ENCODE measurements at regions of chr5 and their contacts with region 1.

Region 1: GRCh38 chr5:118791926-118792734 is 196.2 kb downstream of the DTWD2 start:
- DNase-seq: peak; percentile 36
- ATAC-seq: peak; percentile 97
- H3K4me3 ChIP-seq: no peak overlapping the region
- H3K27ac ChIP-seq: no peak overlapping the region
- H3K4me1 ChIP-seq: no peaks in the 10 kb centered on the region
- H3K27me3 ChIP-seq: no peaks in the 10 kb centered on the region
- CTCF ChIP-seq: peak; percentile 78 to 88 (median 84)
- EP300 ChIP-seq: no peak
- POLR2A ChIP-seq: no peak
- RAD21 ChIP-seq: peak; percentile 90

Region 2: DNA sequence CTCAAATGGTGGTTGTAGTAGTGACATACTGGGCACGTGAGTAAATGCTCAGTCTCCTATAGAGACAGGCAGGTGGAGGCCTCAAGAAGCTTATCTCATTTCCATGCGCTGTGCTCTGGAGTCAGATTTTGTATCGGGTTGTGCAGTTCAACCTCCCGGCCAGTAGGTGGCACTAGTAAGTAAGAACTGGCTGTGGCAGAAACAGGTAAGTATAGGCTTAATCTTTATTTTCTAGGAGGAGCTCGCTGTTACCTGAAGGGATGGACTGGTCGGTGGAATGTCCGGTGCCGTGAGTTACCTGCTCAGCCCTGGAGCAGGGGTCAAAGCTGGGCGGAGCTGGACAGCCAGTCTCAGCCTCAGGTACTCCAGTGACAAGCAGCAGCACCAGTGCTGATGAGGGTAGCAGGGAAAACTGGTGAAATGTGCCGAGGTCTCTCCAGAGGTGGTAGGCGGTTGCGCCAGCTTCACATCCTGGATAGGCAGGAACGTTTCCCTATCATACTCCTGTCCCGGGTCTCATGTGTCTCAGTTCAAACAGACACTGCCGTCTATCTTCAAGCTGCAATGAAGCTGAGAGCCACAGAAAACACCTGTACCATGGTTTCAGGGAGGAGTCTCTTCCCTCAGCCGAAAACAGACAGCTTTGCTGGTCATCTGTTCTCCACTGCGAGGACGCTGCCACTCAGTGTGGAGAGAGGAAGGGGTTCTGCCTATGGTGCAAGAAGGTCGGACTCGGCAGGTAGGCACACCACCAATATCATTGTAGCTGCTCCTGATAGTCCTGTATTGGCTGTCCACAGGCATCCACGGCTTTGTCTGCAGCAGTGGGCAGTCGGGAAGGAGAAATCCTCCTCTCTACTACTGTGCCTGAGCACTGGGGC is 1337.2 kb before region 1 on chr5:
- CTCF ChIA-PET with region 1: interaction called, 10 read pairs
- POLR2A ChIA-PET with region 1: no interaction called
- RAD21 ChIA-PET with region 1: interaction called, 10 read pairs
- SMC1A ChIA-PET with region 1: interaction called, 3 read pairs
- in situ Hi-C with region 1: loop called (anchors 10 kb)
- intact Hi-C with region 1: loop called (anchors 2 kb)
- DNase-seq: peak; percentile 20
- ATAC-seq: peak; percentile 95
- H3K4me3 ChIP-seq: peak overlapping the region; percentile 1; the same call in 1 of the 2 replicates
- H3K27ac ChIP-seq: no peak overlapping the region
- H3K4me1 ChIP-seq: no peaks in the 10 kb centered on the region
- H3K27me3 ChIP-seq: no peaks in the 10 kb centered on the region
- CTCF ChIP-seq: peak; percentile 80 to 91 (median 87)
- EP300 ChIP-seq: no peak
- POLR2A ChIP-seq: no peak
- RAD21 ChIP-seq: peak; percentile 81

Region 3: GRCh38 chr5:118593003-118593328 is 199.2 kb before region 1 on chr5:
- CTCF ChIA-PET with region 1: no interaction called
- POLR2A ChIA-PET with region 1: no interaction called
- RAD21 ChIA-PET with region 1: no interaction called
- SMC1A ChIA-PET with region 1: interaction called, 3 read pairs
- in situ Hi-C with region 1: no loop called
- intact Hi-C with region 1: loop called (anchors 1 kb)
- DNase-seq: no peak
- ATAC-seq: peak; percentile 57; the same call in 2 of the 3 replicates
- H3K4me3 ChIP-seq: no peak overlapping the region
- H3K27ac ChIP-seq: no peak overlapping the region
- H3K4me1 ChIP-seq: no peaks in the 10 kb centered on the region
- H3K27me3 ChIP-seq: no peaks in the 10 kb centered on the region
- CTCF ChIP-seq: peak; percentile 20 to 32 (median 30); a peak in 2 of 6 replicates
- EP300 ChIP-seq: no peak
- POLR2A ChIP-seq: no peak
- RAD21 ChIP-seq: 0 out of 2 replicates have a peak, but pooled peaks have one; percentile 20

Region 4: GRCh38 chr5:118698774-118699173 is 93.4 kb before region 1 on chr5:
- CTCF ChIA-PET with region 1: interaction called, 8 read pairs
- POLR2A ChIA-PET with region 1: no interaction called
- RAD21 ChIA-PET with region 1: interaction called, 11 read pairs
- SMC1A ChIA-PET with region 1: interaction called, 3 read pairs
- in situ Hi-C with region 1: no loop called
- intact Hi-C with region 1: loop called (anchors 5 kb)
- DNase-seq: no peak
- ATAC-seq: peak; percentile 52
- H3K4me3 ChIP-seq: no peak overlapping the region
- H3K27ac ChIP-seq: no peak overlapping the region
- H3K4me1 ChIP-seq: no peaks in the 10 kb centered on the region
- H3K27me3 ChIP-seq: no peaks in the 10 kb centered on the region
- CTCF ChIP-seq: peak in 2 of 3 experiments; percentile 7 to 41; a peak in 2 of 6 replicates
- EP300 ChIP-seq: no peak
- POLR2A ChIP-seq: no peak
- RAD21 ChIP-seq: peak; percentile 43; the same call in 1 of the 2 replicates

Region 5: DNA sequence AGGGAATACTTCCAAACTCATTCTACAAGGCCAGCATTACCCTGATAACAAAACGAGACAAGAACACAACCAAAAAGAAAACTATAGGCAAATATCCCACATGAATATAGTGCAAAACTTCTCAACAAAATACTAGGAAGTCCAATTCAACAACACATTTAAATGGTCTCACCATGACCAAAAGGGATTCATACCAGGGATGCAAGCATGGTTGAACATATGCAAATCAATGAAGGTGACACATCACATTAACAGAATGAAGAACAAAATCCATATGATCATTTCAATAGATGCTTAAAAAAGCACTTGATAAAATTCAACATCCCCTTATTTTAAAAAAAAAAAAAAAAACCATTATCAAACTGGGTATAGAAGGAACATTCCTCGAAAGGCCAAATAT is 10.2 kb after region 1 on chr5:
- CTCF ChIA-PET with region 1: interaction called, 12 read pairs
- POLR2A ChIA-PET with region 1: no interaction called
- RAD21 ChIA-PET with region 1: no interaction called
- SMC1A ChIA-PET with region 1: interaction called, 5 read pairs
- in situ Hi-C with region 1: no loop called
- intact Hi-C with region 1: no loop called
- DNase-seq: no peak
- ATAC-seq: no peak
- H3K4me3 ChIP-seq: no peak overlapping the region
- H3K27ac ChIP-seq: no peak overlapping the region
- H3K4me1 ChIP-seq: no peaks in the 10 kb centered on the region
- H3K27me3 ChIP-seq: no peaks in the 10 kb centered on the region
- CTCF ChIP-seq: no peak
- EP300 ChIP-seq: no peak
- POLR2A ChIP-seq: no peak
- RAD21 ChIP-seq: no peak

Region 6: DNA sequence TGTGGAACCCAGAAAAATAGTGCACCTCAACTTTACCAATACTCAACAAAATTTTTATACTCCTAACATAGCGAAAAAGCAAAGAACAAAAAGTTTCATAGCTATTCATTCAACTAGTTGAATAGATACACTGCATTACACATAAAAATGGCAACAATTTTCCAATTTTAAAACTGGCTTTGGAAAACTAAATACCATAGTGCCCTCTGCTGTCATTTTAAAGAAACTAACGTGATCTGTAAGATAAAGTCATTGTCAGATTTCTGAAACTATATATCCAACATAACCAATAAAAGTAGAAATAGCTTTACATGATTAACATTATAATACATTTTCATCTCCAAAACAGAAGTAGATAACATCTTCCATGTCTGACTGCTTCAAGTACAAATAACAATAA is 164.6 kb after region 1 on chr5:
- CTCF ChIA-PET with region 1: interaction called, 25 read pairs
- POLR2A ChIA-PET with region 1: no interaction called
- RAD21 ChIA-PET with region 1: interaction called, 4 read pairs
- SMC1A ChIA-PET with region 1: interaction called, 13 read pairs
- in situ Hi-C with region 1: no loop called
- intact Hi-C with region 1: loop called (anchors 5 kb)
- DNase-seq: no peak
- ATAC-seq: no peak
- H3K4me3 ChIP-seq: no peak overlapping the region
- H3K27ac ChIP-seq: no peak overlapping the region
- H3K4me1 ChIP-seq: no peaks in the 10 kb centered on the region
- H3K27me3 ChIP-seq: no peaks in the 10 kb centered on the region
- CTCF ChIP-seq: peak in 2 of 3 experiments; percentile 31 to 46; a peak in 2 of 6 replicates
- EP300 ChIP-seq: no peak
- POLR2A ChIP-seq: no peak
- RAD21 ChIP-seq: peak; percentile 56

Region 7: GRCh38 chr5:119031905-119032304 is 239.8 kb after region 1 on chr5:
- CTCF ChIA-PET with region 1: no interaction called
- POLR2A ChIA-PET with region 1: no interaction called
- RAD21 ChIA-PET with region 1: no interaction called
- SMC1A ChIA-PET with region 1: no interaction called
- in situ Hi-C with region 1: no loop called
- intact Hi-C with region 1: no loop called
- DNase-seq: peak; percentile 73
- ATAC-seq: peak; percentile 93
- H3K4me3 ChIP-seq: peak overlapping the region; percentile 29; the same call in 1 of the 2 replicates
- H3K27ac ChIP-seq: peak overlapping the region; percentile 95
- H3K4me1 ChIP-seq: peaks cover 39% of the 10 kb centered on the region
- H3K27me3 ChIP-seq: no peaks in the 10 kb centered on the region
- CTCF ChIP-seq: no peak
- EP300 ChIP-seq: no peak
- POLR2A ChIP-seq: peak; percentile 51; the same call in 1 of the 2 replicates
- RAD21 ChIP-seq: no peak

Region 8: DNA sequence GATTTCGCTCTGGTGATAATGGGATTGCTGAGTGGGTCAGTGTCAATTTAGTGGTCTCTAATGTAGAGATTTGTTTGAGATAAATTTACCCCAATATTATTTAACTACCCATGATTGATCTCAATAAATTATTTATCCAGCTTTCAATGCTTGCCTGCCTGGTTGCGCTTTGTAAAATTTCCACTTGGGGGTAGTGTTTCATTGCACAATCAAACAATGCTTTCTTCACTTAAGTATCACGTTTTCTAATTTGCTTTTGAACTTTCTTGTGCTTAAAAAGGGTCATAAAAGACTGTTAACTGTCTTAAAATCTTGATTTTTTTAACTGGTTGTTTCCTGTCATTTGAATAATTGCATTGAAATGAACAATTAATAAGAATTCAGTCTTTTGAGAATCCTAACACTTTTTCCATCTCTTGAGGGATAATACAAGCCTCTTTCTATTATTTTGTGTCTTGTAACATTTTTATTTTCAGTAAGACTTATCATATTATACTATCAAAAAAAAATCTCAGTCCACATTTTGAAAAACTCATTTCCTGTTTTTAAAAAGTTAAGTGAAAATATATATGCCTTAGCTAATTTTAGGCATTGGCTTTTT is 678.8 kb after region 1 on chr5:
- CTCF ChIA-PET with region 1: no interaction called
- POLR2A ChIA-PET with region 1: no interaction called
- RAD21 ChIA-PET with region 1: no interaction called
- SMC1A ChIA-PET with region 1: no interaction called
- in situ Hi-C with region 1: no loop called
- intact Hi-C with region 1: no loop called
- DNase-seq: no peak
- ATAC-seq: peak; percentile 78
- H3K4me3 ChIP-seq: no peak overlapping the region
- H3K27ac ChIP-seq: peak overlapping the region; percentile 81
- H3K4me1 ChIP-seq: peaks cover 15% of the 10 kb centered on the region
- H3K27me3 ChIP-seq: no peaks in the 10 kb centered on the region
- CTCF ChIP-seq: peak; percentile 62 to 79 (median 75); a peak in 5 of 6 replicates
- EP300 ChIP-seq: no peak
- POLR2A ChIP-seq: no peak
- RAD21 ChIP-seq: peak; percentile 93

Measured in GM12878 (cell line).